ENCODE measurements at regions of chr7 and their contacts with region 1.

Region 1: GRCh38 chr7:150378115-150378852 is 846 bp upstream of the ZNF775 start:
- DNase-seq: no peak
- ATAC-seq: peak; percentile 32
- H3K4me3 ChIP-seq: peak overlapping the region; percentile 82 to 92
- H3K27ac ChIP-seq: peak overlapping the region; percentile 98
- H3K4me1 ChIP-seq: peaks cover 74% of the 10 kb centered on the region
- H3K27me3 ChIP-seq: no peaks in the 10 kb centered on the region
- CTCF ChIP-seq: no peak

Region 2: DNA sequence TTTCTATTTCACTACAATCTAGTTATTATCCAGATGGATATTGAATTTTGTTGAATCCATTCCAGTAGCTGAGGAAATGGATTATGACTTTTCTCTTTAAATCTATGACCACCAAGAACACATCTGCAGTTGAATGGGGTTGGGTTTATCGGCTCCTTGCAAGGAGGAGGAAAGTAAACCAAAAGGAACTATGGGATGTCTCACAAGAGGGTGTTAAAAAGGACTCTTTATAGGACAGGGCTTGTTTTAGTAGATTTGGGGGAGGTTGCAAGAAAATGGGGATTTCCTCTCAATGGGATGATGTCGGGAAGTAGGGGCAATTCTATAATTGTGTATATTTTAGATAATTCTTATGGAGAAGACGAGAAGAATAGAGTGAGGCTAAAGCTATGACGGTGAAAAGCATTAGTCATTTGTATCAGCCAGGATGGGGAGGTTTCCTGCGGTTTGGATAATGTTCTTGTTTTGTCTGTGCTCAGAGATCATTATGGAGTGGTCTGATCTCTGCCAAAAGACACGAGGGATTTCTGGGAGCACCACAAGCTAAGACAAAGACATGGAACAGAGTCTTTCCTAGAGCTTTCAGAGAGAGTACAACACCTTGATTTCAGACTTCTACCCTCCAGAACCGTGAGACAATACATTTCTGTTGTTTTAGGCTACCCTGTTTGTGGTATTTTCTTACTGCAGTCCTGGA is 60.4 kb before region 1 on chr7:
- CTCF ChIA-PET with region 1: no interaction called
- POLR2A ChIA-PET with region 1: interaction called, 10 read pairs
- in situ Hi-C with region 1: no loop called
- intact Hi-C with region 1: no loop called
- DNase-seq: no peak
- ATAC-seq: no peak
- H3K4me3 ChIP-seq: no peak overlapping the region
- H3K27ac ChIP-seq: no peak overlapping the region
- H3K4me1 ChIP-seq: peaks cover 14% of the 10 kb centered on the region
- H3K27me3 ChIP-seq: no peaks in the 10 kb centered on the region
- CTCF ChIP-seq: no peak

Region 3: DNA sequence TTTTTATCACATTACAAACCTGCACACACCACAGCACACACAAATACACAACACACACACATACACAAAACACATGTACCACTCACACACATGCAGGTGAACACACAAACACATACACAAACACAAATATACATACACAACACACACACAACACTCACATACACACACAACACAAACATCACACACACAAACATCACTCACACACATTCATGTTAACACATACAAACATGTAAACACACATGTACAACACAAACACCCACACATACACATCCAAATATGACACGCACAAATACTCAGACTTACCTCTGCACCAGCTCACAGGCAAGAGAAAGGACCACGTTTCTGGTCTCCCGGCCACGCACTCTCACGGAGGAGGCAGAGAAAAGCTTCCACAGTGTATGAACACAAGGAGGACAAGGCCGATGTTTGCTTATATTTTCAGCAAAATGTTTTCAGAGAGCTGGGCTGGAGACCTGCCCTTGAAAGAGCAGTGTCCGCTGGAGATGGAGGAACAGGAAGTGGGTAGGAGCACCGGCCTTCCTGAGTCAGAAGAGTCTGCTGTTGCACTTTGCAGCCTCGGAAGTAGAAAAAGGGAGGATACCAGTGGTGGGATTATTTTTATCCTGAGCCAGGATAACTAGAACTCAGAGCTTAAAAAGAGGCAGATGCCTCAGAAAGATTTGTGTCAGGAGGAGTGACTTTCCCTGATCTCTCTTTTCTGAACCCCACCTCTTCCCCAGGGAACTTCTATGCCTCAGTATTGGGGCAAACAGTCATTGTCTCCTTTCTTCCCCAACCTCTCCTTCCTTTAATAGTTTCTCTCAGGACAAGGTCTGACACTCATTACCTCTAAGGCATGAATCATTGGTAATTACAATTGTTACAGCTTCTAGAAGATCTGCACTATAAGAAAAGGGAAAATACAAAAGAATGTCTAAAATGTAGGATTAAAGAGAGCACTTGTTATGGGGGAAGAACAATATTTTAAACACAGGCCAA is 253.9 kb after region 1 on chr7 and contains the start of gene GIMAP6:
- CTCF ChIA-PET with region 1: no interaction called
- POLR2A ChIA-PET with region 1: no interaction called
- in situ Hi-C with region 1: no loop called
- intact Hi-C with region 1: no loop called
- DNase-seq: no peak
- ATAC-seq: no peak
- H3K4me3 ChIP-seq: no peak within 1 kb of the TSS
- H3K27ac ChIP-seq: no peak within 1 kb of the TSS
- H3K4me1 ChIP-seq: no peaks in the 10 kb centered on the region
- H3K27me3 ChIP-seq: no peaks in the 10 kb centered on the region
- CTCF ChIP-seq: no peak
- total RNA-seq, gene GIMAP6: 0.23 TPM

Measured in Panc1 (cell line).